ENCODE measurements at regions of chr17 and their contacts with region 1.

Region 1: DNA sequence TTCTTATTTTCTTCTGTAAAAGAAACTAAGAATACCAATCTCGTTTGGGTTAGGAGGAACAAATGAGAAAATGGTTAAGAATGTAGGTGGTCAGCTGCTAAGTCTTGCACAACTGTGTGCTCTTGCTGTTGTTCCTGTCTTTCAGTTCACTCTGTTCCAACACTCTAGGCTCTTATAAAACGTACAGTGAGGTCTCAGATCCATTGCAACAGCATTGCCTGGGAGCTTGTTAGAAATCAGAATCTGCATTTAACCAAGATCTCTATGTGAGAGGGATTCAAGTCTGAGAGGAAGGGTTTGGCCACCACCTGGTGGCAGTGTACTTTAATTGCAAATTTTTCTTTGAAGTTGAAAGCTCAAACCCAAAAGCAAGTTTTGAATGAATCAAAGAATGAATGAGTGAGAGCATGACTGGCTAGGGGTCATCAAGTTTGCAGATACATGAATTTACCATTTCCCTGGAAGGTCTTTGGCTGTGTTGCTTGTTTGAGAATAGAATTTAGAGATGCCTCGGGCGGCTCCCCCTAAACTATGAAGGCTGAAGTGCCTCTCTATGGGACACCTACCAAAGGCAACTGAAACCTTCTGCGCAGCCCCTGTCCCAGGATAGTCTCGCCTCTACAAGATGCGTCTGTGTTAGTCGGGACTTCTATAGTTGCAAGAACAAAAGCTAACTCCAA is 2.5 kb downstream of the ALOX15B start:
- DNase-seq: peak; percentile 42

Region 2: DNA sequence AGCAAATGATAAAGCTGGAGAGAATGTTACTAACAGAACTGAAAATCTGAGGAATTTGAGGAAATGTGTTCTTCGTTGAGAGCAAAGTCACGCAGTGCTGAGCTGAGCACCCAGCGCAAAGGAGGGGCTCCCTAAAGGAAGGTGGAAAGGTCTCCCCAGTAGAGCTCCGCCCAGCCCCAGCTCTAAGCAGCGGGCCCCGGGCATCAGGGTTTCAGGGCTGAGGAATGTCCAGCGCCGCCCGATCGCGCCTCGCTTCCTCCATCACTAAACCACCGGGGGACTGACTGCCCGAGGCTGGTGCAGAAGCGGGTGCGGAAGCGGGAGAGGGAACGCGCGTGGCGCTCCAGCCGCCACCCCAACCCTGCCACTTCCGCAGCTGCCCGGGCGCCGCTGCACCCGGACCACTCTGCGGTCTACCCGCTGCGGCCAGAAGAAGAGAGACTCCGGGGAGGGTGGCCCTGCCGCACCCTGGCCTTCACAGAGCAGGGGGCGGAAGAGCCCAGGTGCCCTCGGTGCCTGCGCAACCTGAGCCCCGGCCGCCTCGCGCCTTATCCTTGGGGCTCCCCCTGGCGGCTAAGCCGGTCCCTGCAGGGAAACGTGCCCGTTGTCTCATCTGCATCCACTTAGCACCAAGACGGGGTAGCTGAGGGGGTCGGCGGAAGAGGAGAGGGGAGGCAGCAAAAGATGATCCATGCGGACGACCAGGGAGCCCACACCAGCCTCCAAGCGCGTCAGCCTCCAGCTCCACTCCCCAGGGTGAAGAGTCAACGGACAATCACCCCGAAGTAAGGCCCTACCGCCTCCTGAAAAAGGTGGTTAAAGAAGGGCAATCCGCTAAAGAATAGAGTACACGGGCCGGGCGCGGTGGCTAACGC is 51.4 kb before region 1 on chr17:
- CTCF ChIA-PET with region 1: interaction called, 14 read pairs
- POLR2A ChIA-PET with region 1: interaction called, 4 read pairs
- DNase-seq: peak; percentile 89

Region 3: GRCh38 chr17:8016632-8017478 is 24.5 kb before region 1 on chr17:
- CTCF ChIA-PET with region 1: interaction called, 14 read pairs
- POLR2A ChIA-PET with region 1: interaction called, 7 read pairs
- DNase-seq: peak; percentile 76

Measured in HEK293T (cell line).